Mammary epithelial cell (primary cell): ENCODE measurements at regions of chr2 and their contacts with region 1.

Region 1: DNA sequence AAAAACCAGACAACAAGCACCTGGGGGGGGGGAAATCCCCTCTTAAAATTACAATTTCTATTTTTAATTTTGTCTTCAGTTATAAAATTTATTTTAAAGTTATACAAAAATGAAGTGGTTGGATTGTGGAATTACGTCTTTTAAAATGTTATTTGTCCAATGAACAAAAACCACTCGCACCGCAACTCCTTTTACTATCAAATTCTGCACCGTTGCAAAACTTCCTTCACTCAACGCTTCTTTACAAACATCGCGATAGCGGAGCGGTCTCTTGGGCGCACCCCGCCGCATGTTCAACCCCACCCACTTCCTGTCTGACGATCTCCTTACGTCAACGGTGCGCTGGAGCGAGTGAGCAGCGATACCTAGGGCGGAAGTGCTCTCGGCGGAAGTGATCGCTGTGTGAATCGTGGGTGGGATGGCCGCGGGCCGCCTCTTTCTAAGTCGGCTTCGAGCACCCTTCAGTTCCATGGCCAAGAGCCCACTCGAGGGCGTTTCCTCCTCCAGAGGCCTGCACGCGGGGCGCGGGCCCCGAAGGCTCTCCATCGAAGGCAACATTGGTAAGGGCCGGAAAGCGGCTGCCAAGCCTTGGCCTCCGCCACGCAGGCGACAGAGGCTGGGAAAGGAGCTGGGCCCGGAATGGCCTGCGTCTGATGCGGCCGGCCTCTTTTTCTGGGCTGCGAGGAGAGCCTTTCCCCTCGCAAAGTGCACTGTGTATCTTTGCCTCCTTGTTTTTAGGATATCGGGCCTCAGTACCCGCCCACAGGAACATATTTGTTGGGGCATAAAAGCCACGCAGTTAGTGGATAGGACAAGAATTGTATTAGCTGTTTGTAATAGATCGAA is at the start of gene DGUOK:
- DNase-seq: peak; percentile 99
- H3K4me3 ChIP-seq: peak within 1 kb of the TSS; percentile 60 to 79 (median 68)
- H3K27ac ChIP-seq: peak within 1 kb of the TSS; percentile 97
- H3K4me1 ChIP-seq: peaks cover 44% of the 10 kb centered on the region
- H3K27me3 ChIP-seq: no peaks in the 10 kb centered on the region
- CTCF ChIP-seq: no peak
- total RNA-seq, gene DGUOK: 56.3 to 78.2 TPM

Region 2: DNA sequence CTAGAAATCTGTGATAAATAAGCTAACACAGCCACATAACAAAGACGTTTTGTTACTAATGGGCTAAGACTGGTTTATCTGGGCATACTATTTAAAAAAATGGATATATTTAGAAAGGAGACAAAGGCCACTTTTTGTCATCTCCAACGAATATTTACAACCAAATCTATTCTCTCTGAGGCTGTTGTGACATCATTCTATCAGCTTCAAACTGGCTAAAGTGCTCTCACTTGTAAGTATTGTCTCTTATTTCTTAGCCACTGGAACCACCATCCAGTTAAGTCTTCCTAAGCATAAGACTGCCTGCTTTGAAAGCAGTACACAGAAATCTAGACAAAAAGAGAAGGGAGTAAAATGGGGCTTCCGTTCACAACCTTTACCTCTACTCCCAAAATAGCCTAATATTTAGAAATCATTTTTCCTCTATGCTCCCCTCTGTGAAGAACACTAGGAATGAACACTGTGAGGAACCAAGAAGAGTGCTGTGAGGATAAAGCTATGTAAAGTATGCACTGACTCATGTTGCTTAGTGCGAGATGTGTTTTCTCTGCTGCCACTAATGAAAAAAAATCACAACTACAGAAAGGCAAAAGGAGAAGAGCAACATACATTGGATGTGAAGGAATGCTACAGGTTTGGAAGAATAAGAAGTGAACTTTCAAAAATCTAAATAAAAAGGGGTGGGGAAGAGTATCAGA is 1364.9 kb before region 1 on chr2:
- CTCF ChIA-PET with region 1: no interaction called
- dilution Hi-C with region 1: no loop called
- in situ Hi-C with region 1: no loop called
- intact Hi-C with region 1: no loop called
- DNase-seq: peak; percentile 44
- H3K4me3 ChIP-seq: no peak overlapping the region
- H3K27ac ChIP-seq: no peak overlapping the region
- H3K4me1 ChIP-seq: peaks cover 14% of the 10 kb centered on the region
- H3K27me3 ChIP-seq: no peaks in the 10 kb centered on the region
- CTCF ChIP-seq: no peak

Region 3: DNA sequence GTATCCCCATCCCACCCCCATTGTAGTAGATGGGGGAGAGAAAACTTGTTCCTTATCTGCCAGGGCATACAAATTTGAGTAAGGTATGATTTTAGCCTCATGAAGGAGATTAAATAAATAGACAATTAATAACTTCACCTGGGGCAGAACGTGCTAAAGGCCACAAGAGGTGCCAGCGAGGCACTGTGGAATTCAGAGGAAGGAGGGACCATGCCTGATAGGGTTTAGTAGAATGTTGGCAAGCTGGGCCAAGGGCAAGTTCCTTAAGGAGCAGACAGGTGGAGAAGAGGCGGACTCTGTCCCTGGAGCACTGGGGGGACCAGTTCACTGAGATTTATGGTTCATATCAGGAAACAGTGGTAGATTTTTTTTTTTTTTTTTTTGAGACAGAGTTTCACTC is 75.4 kb before region 1 on chr2:
- CTCF ChIA-PET with region 1: interaction called, 26 read pairs
- dilution Hi-C with region 1: no loop called
- in situ Hi-C with region 1: loop called in 1 of 2 experiments (anchors 10 kb)
- intact Hi-C with region 1: loop called (anchors 5 kb)
- DNase-seq: no peak
- H3K4me3 ChIP-seq: no peak overlapping the region
- H3K27ac ChIP-seq: no peak overlapping the region
- H3K4me1 ChIP-seq: peaks cover 21% of the 10 kb centered on the region
- H3K27me3 ChIP-seq: no peaks in the 10 kb centered on the region
- CTCF ChIP-seq: peak; percentile 52 to 62

Region 4: DNA sequence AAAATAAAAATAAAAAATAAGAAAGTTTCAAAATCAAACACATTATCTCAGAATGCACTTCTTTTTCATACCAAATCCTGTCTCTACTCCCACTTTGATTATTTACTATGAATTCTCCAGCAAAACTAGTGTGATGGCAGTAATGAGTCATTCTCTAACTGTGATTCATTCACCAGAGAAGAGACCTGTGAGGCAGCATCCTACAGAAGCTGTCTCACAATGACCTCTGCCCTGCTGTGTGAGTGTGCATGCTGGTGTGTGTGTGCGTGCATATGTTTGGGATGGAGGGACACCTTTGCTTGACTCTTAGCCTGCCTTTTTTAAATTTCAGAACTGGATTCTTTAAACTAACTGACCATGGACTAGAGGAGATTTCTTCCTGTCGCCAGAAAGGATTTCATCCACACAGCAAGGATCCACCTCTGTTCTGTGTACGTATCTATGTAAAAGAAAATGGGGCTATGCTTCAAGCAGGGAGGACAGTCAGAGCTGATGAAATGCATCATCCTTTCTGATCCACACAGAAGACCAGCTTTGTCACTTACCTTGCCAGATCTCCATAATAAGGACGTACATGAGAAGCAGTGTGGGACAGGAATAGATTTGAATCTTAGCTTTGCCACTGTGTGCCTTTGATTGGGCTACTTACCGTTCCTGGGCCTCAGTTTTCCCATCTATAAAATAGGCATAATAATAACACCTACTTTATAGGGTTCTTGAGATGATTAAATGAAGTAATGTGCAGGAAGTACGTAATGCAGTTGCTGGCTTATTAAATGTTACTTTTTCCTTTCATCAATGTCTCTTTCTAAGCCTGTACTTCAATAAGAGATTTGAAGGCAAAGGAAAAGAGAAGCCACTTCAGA is 66.8 kb before region 1 on chr2:
- CTCF ChIA-PET with region 1: no interaction called
- dilution Hi-C with region 1: loop called (anchors 5 kb)
- in situ Hi-C with region 1: loop called in 1 of 2 experiments (anchors 10 kb)
- intact Hi-C with region 1: loop called (anchors 5 kb)
- DNase-seq: peak; percentile 87
- H3K4me3 ChIP-seq: no peak overlapping the region
- H3K27ac ChIP-seq: peak overlapping the region; percentile 39
- H3K4me1 ChIP-seq: peaks cover 28% of the 10 kb centered on the region
- H3K27me3 ChIP-seq: no peaks in the 10 kb centered on the region
- CTCF ChIP-seq: no peak

Region 5: GRCh38 chr2:73939419-73939818 is 12.7 kb after region 1 on chr2:
- CTCF ChIA-PET with region 1: no interaction called
- dilution Hi-C with region 1: no loop called
- in situ Hi-C with region 1: no loop called
- intact Hi-C with region 1: loop called (anchors 1 kb)
- DNase-seq: peak; percentile 98
- H3K4me3 ChIP-seq: no peak overlapping the region
- H3K27ac ChIP-seq: peak overlapping the region; percentile 89
- H3K4me1 ChIP-seq: peaks cover 58% of the 10 kb centered on the region
- H3K27me3 ChIP-seq: no peaks in the 10 kb centered on the region
- CTCF ChIP-seq: peak in 1 of 2 donors; percentile 60

Region 6: DNA sequence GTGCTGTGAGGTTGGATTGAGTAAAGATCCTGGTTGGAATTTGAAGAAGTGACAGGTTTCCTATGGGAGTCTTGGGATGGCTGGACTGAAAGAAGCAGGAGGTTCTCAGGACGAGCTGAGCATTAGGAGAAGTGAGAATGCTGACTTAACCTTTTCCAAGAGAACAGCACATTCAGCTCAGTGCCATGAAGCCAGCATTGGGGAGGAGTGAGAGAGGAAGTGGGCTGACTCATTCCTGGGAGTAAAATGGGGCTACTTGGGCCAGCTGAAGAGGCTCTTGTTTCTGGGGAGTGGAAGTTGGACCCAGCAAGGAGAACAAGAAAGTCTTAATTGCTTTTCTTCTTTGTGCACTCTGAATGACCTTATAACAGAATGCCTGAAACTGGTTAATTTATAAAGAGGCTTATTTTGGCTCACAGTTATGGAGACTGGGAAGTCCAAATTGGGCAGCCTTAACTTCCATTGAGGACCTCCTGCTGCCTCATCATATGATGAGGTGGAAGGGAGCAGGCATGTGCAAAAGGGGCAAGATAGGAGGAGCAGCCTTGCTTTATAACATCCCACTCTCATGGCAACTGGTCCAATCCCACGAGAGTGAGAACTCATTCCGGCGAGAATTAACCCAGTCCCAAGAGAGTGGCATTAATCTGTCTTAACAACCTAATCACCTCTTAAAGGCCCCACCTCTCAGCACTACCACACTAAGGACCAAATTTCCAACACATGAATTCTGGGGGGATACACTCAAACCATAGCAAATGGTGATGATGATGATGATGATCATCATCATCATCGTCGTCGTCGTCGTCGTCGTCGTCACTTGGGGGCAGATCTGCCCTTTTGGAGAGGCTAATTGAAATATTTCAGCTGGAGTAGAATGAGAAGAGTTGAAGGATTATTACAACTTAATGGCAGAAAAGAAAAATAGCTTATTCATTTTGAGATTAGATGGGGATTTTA is 26.1 kb after region 1 on chr2:
- CTCF ChIA-PET with region 1: no interaction called
- dilution Hi-C with region 1: no loop called
- in situ Hi-C with region 1: no loop called
- intact Hi-C with region 1: no loop called
- DNase-seq: peak; percentile 57
- H3K4me3 ChIP-seq: no peak overlapping the region
- H3K27ac ChIP-seq: no peak overlapping the region
- H3K4me1 ChIP-seq: peaks cover 7% of the 10 kb centered on the region
- H3K27me3 ChIP-seq: no peaks in the 10 kb centered on the region
- CTCF ChIP-seq: no peak

Region 7: GRCh38 chr2:74002487-74003391 is 76.0 kb after region 1 on chr2:
- CTCF ChIA-PET with region 1: interaction called, 21 read pairs
- dilution Hi-C with region 1: no loop called
- in situ Hi-C with region 1: no loop called
- intact Hi-C with region 1: loop called (anchors 5 kb)
- DNase-seq: peak; percentile 83
- H3K4me3 ChIP-seq: peak overlapping the region; percentile 43 to 60 (median 53)
- H3K27ac ChIP-seq: peak overlapping the region; percentile 42
- H3K4me1 ChIP-seq: peaks cover 29% of the 10 kb centered on the region
- H3K27me3 ChIP-seq: no peaks in the 10 kb centered on the region
- CTCF ChIP-seq: no peak